Activated CD8-positive, alpha-beta T cell treated with anti-CD3 and anti-CD28 coated beads, Interleukin-2, amount 10 ng/mL, durations not matched to agents 7 days and 5 days (primary cell): ENCODE measurements at regions of chr7 and their contacts with region 1.

Region 1: GRCh38 chr7:128387216-128388144 is 22.3 kb downstream of the IMPDH1 start:
- DNase-seq: peak; percentile 78
- ATAC-seq: peak; percentile 84
- H3K4me3 Mint-ChIP-seq: no peak overlapping the region
- H3K27ac Mint-ChIP-seq: no peak overlapping the region
- H3K4me1 Mint-ChIP-seq: peaks cover 2% of the 10 kb centered on the region
- H3K27me3 Mint-ChIP-seq: peaks cover 4% of the 10 kb centered on the region

Region 2: DNA sequence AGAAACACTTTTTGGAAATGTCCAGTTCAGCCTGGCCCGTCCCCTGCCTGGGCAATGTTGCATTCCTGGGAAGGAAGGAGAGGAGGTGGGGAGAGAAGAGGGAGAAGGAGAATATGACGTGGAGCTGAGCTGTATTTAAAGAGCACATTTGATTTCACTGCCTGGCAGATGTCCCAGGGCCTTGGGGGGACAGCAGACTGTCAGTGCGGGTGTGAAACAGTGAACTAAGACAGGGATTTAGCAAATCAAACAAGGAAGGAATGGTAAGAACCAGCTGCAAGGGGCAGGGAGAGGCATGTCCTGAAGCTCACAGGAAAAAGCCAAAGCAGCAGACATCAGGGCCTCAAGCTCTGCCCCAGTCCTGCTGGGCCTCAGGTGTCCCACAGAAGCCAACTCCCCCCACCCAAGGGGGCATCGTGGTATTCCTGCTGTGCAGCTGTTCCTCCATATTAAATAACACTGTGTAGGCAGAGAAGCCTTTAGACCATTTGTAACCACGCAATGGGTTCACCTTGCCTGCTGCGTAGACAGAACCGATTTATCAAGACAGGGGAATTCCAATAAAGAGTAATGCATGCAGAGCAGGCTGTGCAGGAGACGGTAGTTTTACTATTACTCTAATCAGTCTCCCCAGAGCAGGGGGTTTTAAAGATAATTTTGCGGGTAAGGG is 128.2 kb before region 1 on chr7:
- CTCF ChIA-PET with region 1: no interaction called
- POLR2A ChIA-PET with region 1: no interaction called
- DNase-seq: no peak
- ATAC-seq: no peak
- H3K4me3 Mint-ChIP-seq: no peak overlapping the region
- H3K27ac Mint-ChIP-seq: no peak overlapping the region
- H3K4me1 Mint-ChIP-seq: no peaks in the 10 kb centered on the region
- H3K27me3 Mint-ChIP-seq: peaks cover 8% of the 10 kb centered on the region

Region 3: GRCh38 chr7:128311013-128311412 is 76.5 kb before region 1 on chr7:
- CTCF ChIA-PET with region 1: no interaction called
- POLR2A ChIA-PET with region 1: no interaction called
- DNase-seq: no peak
- ATAC-seq: no peak
- H3K4me3 Mint-ChIP-seq: no peak overlapping the region
- H3K27ac Mint-ChIP-seq: no peak overlapping the region
- H3K4me1 Mint-ChIP-seq: peaks cover 4% of the 10 kb centered on the region
- H3K27me3 Mint-ChIP-seq: no peaks in the 10 kb centered on the region

Region 4: DNA sequence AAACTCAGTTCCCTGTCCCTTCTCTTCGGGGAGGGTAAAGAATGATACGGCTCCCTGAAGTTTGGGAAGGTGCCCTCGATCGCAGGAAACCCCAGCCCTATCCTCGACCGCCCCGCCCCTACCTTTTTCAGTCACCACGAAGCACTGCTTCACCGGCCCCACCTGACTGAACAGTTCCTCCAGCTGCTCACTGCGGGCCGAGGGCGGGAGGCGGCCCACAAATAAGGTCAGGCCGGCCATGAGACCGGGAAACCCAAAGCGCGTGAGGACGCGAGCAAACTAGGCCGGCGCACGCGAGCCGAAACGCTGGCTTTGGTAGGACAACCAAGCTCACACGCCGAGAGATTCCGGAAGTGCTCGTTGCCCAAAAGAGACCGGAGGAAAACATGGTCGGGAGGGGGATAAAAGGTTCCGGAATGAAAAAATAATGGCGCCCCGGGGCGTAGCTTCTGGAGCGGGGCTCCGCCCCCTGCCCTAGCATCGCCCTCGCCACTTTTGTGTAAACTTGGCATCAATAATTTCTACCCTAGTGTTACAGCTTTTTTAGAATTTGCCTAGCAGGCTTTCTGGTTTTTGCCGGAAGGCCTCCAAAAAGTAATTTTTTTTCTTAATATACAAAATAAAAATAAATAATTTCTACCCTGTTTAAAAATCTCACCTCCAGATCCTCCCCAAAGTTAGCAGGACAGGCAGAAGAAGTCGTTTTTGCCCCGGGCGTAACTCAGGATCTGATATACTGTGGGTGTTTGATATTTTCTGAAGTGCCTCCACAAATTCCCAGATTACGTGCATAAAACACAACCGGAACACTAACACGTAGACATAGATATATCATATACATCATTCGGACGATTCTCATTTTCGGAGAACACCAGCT is 43.7 kb before region 1 on chr7 and contains the start of gene RBM28:
- CTCF ChIA-PET with region 1: interaction called, 258 read pairs
- POLR2A ChIA-PET with region 1: interaction called, 4 read pairs
- DNase-seq: peak; percentile 90
- ATAC-seq: peak; percentile 98
- H3K4me3 Mint-ChIP-seq: peak within 1 kb of the TSS; percentile 91
- H3K27ac Mint-ChIP-seq: peak within 1 kb of the TSS; percentile 93
- H3K4me1 Mint-ChIP-seq: peaks cover 23% of the 10 kb centered on the region
- H3K27me3 Mint-ChIP-seq: peaks cover 12% of the 10 kb centered on the region
- total RNA-seq, gene RBM28: 40.4 to 43.3 TPM

Region 5: GRCh38 chr7:128356546-128357216 is 30.8 kb before region 1 on chr7:
- CTCF ChIA-PET with region 1: interaction called, 258 read pairs
- POLR2A ChIA-PET with region 1: no interaction called
- DNase-seq: no peak
- ATAC-seq: no peak
- H3K4me3 Mint-ChIP-seq: no peak overlapping the region
- H3K27ac Mint-ChIP-seq: no peak overlapping the region
- H3K4me1 Mint-ChIP-seq: peaks cover 12% of the 10 kb centered on the region
- H3K27me3 Mint-ChIP-seq: peaks cover 44% of the 10 kb centered on the region

Region 6: GRCh38 chr7:128366300-128366699 is 21.2 kb before region 1 on chr7:
- CTCF ChIA-PET with region 1: interaction called, 10 read pairs
- POLR2A ChIA-PET with region 1: no interaction called
- DNase-seq: no peak
- ATAC-seq: no peak
- H3K4me3 Mint-ChIP-seq: no peak overlapping the region
- H3K27ac Mint-ChIP-seq: no peak overlapping the region
- H3K4me1 Mint-ChIP-seq: peaks cover 11% of the 10 kb centered on the region
- H3K27me3 Mint-ChIP-seq: peaks cover 64% of the 10 kb centered on the region

Region 7: GRCh38 chr7:128373606-128374005 is 13.9 kb before region 1 on chr7:
- CTCF ChIA-PET with region 1: interaction called, 16 read pairs
- POLR2A ChIA-PET with region 1: no interaction called
- DNase-seq: no peak
- ATAC-seq: no peak
- H3K4me3 Mint-ChIP-seq: no peak overlapping the region
- H3K27ac Mint-ChIP-seq: no peak overlapping the region
- H3K4me1 Mint-ChIP-seq: no peaks in the 10 kb centered on the region
- H3K27me3 Mint-ChIP-seq: peaks cover 20% of the 10 kb centered on the region

Region 8: DNA sequence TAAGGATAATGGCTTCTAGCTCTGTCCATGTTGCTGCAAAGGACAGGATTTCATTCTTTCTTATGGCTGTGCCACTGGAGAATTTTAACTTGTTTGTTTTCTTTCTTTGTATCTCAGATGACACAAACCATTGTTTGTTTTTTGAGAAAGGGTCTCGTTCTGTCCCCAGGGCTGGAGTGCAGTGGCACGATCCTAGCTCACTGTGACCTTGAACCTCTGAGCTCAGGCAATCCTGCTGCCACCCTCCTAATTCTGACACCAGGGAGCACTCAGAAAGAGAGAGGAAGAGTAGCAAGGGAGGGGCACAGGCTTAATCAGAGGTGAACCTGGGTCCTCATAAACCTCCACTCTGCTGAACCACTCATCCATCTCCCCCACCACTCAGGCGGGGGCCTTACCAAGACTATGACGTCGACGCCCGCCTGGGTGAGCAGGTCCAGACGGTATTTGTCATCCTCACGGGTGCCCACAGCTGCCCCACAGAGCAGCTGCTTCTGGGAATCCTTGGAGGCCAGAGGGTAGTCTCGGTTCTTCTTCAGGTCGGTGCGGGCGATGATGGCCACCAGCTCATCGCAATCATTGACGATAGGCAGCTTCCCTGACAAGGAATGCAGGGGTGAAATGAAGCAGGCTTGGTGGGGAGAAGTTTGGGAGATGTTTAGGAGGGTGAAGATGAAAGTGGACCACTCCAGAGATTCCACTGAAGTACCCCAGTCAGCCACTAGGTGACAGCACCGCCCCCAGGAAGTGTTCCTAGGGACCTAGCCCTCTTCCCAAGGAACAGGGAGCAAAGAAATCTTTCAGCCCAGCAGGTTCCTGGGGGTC is 10.7 kb after region 1 on chr7:
- CTCF ChIA-PET with region 1: interaction called, 10 read pairs
- POLR2A ChIA-PET with region 1: no interaction called
- DNase-seq: peak; percentile 46
- ATAC-seq: peak; percentile 35
- H3K4me3 Mint-ChIP-seq: no peak overlapping the region
- H3K27ac Mint-ChIP-seq: peak overlapping the region; percentile 28
- H3K4me1 Mint-ChIP-seq: peaks cover 8% of the 10 kb centered on the region
- H3K27me3 Mint-ChIP-seq: no peaks in the 10 kb centered on the region

Region 9: DNA sequence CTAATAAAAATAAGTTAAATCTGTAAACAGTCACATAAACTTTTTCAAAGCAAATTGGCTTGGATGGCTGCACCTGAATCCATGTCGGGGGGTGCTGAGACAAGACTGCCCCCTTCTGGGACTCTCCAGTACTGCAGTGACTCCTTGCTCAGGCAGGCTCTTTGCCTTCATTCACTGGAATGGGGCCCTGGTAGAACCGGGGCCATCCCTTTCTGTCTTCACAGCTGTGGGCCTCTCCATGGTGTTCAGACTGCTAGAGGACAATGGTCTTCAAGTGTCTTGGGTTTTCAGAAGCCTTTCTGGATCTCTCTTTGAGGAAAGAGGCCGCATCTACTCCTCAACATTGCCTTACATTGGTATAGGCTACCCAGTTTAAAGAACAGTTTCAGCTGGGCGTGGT is 38.4 kb after region 1 on chr7:
- CTCF ChIA-PET with region 1: interaction called, 84 read pairs
- POLR2A ChIA-PET with region 1: no interaction called
- DNase-seq: peak; percentile 87
- ATAC-seq: peak; percentile 78
- H3K4me3 Mint-ChIP-seq: no peak overlapping the region
- H3K27ac Mint-ChIP-seq: no peak overlapping the region
- H3K4me1 Mint-ChIP-seq: peaks cover 12% of the 10 kb centered on the region
- H3K27me3 Mint-ChIP-seq: peaks cover 5% of the 10 kb centered on the region

Region 10: GRCh38 chr7:128672912-128673517 is 285.5 kb after region 1 on chr7:
- CTCF ChIA-PET with region 1: no interaction called
- POLR2A ChIA-PET with region 1: no interaction called
- DNase-seq: peak; percentile 41
- ATAC-seq: peak; percentile 63
- H3K4me3 Mint-ChIP-seq: no peak overlapping the region
- H3K27ac Mint-ChIP-seq: no peak overlapping the region
- H3K4me1 Mint-ChIP-seq: no peaks in the 10 kb centered on the region
- H3K27me3 Mint-ChIP-seq: peaks cover 14% of the 10 kb centered on the region